ENCODE measurements at regions of chr7 and their contacts with region 1.

Region 1: DNA sequence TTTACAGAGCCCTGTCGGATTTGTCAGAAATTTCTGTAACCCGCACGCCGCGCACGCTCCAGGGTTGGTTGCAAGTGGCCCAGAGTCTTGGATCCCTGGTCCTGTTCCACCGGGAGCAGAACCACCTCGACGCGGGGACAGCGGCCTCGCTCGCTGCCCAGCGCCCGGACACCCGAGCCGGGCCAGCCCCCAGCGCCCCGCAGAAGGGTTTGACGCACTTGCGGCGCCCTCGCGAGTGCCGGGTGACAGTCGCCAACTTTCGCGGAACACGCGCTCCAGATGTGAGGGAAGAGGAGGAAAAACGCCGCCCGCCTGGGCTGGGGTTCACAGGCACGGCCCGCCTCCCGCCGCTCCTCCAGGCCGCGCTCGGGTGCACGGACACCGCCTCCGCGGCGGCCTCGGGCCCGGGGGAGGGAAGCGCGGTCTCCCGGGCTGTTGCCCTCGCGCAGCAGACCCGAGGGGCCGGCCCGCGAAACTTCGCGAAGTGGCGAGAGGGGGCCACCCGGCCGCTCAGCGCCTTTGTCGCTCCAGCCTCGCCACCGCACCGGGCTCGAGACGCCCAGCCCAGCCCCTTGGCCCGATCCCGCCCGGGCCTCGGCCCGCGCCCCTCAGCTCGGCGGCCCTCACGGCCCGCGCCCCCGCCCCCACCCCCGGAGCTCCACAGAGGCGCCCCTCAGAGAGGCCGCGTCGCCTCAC is 514 bp downstream of the RNF216 start:
- DNase-seq: peak in 29 of 35 experiments; percentile 1 to 46 (median 16)
- ATAC-seq: peak in 3 of 4 experiments; percentile 39 to 48 (median 43)
- H3K4me3 ChIP-seq: peak overlapping the region; percentile 47 to 78
- H3K4me3 Mint-ChIP-seq: peak overlapping the region; percentile 81 to 85 (median 84)
- H3K27ac ChIP-seq: peak overlapping the region; percentile 27
- H3K27ac Mint-ChIP-seq: peak overlapping the region; percentile 76 to 80
- H3K4me1 ChIP-seq: peaks cover 11 to 41% of the 10 kb centered on the region in 2 experiments
- H3K4me1 Mint-ChIP-seq: peaks cover 40 to 47% (median 41%) of the 10 kb centered on the region in 3 donors
- H3K27me3 ChIP-seq: no peaks in the 10 kb centered on the region
- H3K27me3 Mint-ChIP-seq: no peaks in the 10 kb centered on the region

Region 2: DNA sequence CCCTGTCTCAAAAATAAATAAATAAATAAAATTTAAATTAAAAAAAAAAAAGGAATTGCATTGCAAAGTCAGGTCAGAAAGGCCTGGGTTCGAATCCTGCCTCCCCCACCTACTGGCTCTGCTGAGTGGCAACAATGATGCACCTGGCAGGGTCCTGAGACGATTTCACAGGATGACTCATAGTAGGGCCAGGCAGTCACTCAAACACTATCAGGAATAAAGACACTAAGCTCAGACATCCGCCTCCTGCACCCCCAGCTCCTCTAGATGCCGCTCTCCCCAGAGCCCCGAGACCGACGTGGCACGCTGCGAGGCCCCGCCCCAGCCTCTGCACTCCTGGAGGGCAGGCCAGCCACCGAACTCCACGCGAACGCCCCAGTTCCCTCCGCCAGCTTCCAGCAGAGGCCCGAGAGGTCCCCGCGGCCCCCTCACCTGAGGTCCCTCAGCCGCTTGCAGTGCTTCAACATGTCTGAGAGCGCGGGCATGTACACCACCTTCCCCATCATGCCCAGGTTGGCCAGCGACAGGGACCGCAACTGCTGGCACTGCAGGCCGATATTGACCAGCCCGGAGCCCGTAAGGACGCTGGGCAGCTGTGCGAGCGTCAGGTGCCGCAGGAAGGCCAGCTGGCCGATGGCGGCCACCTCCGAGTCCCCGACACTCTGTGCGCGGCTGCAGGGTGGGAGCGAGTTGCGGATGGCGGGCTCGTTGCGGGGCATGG is 280.7 kb before region 1 on chr7:
- CTCF ChIA-PET with region 1: no interaction called
- POLR2A ChIA-PET with region 1: interaction called in 1 of 2 experiments, 13 read pairs
- DNase-seq: no peak
- ATAC-seq: no peak
- H3K4me3 ChIP-seq: no peak overlapping the region
- H3K4me3 Mint-ChIP-seq: no peak overlapping the region
- H3K27ac ChIP-seq: no peak overlapping the region
- H3K27ac Mint-ChIP-seq: no peak overlapping the region
- H3K4me1 ChIP-seq: peaks cover 0 to 24% of the 10 kb centered on the region in 2 experiments
- H3K4me1 Mint-ChIP-seq: peaks cover 19 to 24% (median 21%) of the 10 kb centered on the region in 3 donors
- H3K27me3 ChIP-seq: no peaks in the 10 kb centered on the region
- H3K27me3 Mint-ChIP-seq: no peaks in the 10 kb centered on the region

Region 3: GRCh38 chr7:5797716-5798115 is 16.8 kb after region 1 on chr7:
- CTCF ChIA-PET with region 1: interaction called, 4 to 12 read pairs
- POLR2A ChIA-PET with region 1: interaction called in 1 of 2 experiments, 10 read pairs
- DNase-seq: peak in 2 of 35 experiments; percentile 10 to 15
- ATAC-seq: no peak
- H3K4me3 ChIP-seq: no peak overlapping the region
- H3K4me3 Mint-ChIP-seq: no peak overlapping the region
- H3K27ac ChIP-seq: no peak overlapping the region
- H3K27ac Mint-ChIP-seq: peak overlapping the region in 1 of 2 donors; percentile 32
- H3K4me1 ChIP-seq: peaks cover 0 to 6% of the 10 kb centered on the region in 2 experiments
- H3K4me1 Mint-ChIP-seq: peaks cover 0 to 6% (median 4%) of the 10 kb centered on the region in 3 donors
- H3K27me3 ChIP-seq: no peaks in the 10 kb centered on the region
- H3K27me3 Mint-ChIP-seq: no peaks in the 10 kb centered on the region

Region 4: DNA sequence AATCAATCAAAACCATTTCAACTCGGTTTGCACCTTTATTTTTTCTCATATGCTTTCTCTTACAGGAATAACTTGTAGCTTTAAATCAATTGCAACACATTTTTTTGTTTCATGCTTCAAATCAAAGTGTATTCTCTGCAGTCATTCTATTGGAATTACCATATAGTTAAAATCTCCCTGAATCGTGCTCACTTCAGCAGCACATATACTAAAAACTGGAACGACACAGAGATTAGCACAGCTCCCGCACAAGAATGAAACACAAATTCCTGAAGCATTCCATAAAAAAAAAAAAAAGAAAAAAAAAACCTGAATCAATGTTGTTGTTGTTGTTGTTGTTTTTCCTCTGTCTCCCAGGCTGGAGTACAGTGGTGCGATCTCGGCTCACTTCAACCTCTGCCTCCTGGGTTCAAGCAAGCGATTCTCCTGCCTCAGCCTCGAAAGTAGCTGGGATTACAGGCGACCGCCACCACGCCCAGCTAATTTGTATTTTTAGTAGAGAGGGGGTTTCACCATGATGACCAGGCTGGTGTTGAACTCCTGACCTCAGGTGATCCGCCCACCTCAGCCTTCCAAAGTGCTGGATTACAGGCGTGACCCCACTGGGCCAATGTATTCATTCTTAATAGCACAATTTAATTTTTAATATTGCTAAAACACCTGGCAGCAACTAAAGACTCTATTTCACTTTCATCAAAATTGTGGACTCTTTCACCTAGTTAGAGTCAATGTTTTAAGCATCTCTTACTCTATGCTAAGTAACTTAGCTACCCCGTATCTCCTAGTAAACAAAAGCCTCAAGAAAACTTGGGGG is 276.6 kb after region 1 on chr7:
- CTCF ChIA-PET with region 1: no interaction called
- POLR2A ChIA-PET with region 1: interaction called in 1 of 2 experiments, 18 read pairs
- DNase-seq: no peak
- ATAC-seq: no peak
- H3K4me3 ChIP-seq: peak overlapping the region; percentile 85 to 91
- H3K4me3 Mint-ChIP-seq: peak overlapping the region; percentile 96 to 99 (median 98)
- H3K27ac ChIP-seq: no peak overlapping the region
- H3K27ac Mint-ChIP-seq: peak overlapping the region; percentile 11 to 43
- H3K4me1 ChIP-seq: peaks cover 9 to 32% of the 10 kb centered on the region in 2 experiments
- H3K4me1 Mint-ChIP-seq: peaks cover 24 to 34% (median 29%) of the 10 kb centered on the region in 3 donors
- H3K27me3 ChIP-seq: no peaks in the 10 kb centered on the region
- H3K27me3 Mint-ChIP-seq: no peaks in the 10 kb centered on the region